Heart right ventricle (tissue), 16 donors: ENCODE measurements at regions of chr14 and their contacts with region 1.

Region 1: GRCh38 chr14:75982266-75983018 is 647 bp upstream of the TGFB3 start:
- DNase-seq: peak; percentile 84 to 87
- ATAC-seq: peak; percentile 60 to 82 (median 70)
- H3K4me3 ChIP-seq: peak overlapping the region; percentile 60 to 92 (median 78)
- H3K27ac ChIP-seq: peak overlapping the region; percentile 88 to 98 (median 96)
- H3K4me1 ChIP-seq: peaks cover 0 to 72% (median 42%) of the 10 kb centered on the region in 9 donors
- H3K27me3 ChIP-seq: no peaks in the 10 kb centered on the region
- CTCF ChIP-seq: peak; percentile 47 to 78 (median 68)

Region 2: GRCh38 chr14:75702616-75703261 is 279.7 kb before region 1 on chr14:
- intact Hi-C with region 1: loop called in 2 of 10 experiments (anchors 1 to 5 kb)
- DNase-seq: no peak
- ATAC-seq: peak; percentile 31 to 71 (median 66)
- H3K4me3 ChIP-seq: no peak overlapping the region
- H3K27ac ChIP-seq: peak overlapping the region in 7 of 10 donors; percentile 9 to 68 (median 47)
- H3K4me1 ChIP-seq: peaks cover 0 to 29% (median 15%) of the 10 kb centered on the region in 9 donors
- H3K27me3 ChIP-seq: no peaks in the 10 kb centered on the region
- CTCF ChIP-seq: no peak

Region 3: DNA sequence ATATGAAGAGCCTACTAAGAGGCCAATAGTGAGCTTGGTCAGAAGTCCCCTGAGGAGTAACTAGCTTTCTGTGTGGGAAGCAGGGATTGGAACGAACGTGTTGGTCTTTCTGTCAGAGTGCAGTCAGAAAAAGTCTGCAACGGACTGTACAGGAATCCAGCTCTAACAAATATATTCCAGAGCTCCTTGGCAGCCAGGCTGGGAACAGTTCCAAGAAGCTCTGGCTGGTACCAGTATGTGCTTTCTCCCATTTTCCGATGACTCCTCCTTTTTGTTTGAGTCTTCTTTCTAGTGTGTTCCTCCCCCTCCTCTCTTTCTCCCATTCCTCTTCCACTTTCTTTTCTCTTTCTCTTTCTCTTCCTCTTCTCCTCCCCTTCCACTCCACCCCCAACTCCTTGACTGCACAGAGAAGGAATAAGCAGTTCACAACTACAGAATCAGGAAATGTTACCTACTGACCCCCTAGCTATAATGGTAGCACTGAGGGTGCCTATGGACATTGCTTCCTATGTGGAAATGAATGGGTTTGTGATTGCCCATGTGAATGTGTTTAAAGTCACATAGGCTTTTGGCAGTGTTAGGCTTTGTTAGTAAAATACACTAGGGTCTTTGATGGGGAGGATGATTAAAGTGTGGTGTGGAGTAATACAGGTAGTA is 261.5 kb before region 1 on chr14:
- intact Hi-C with region 1: loop called in 1 of 10 experiments (anchors 5 kb)
- DNase-seq: peak; percentile 37 to 66
- ATAC-seq: peak; percentile 43 to 80 (median 63)
- H3K4me3 ChIP-seq: peak overlapping the region in 3 of 10 donors; percentile 4 to 18 (median 18)
- H3K27ac ChIP-seq: peak overlapping the region in 9 of 10 donors; percentile 13 to 82 (median 67)
- H3K4me1 ChIP-seq: peaks cover 3 to 72% (median 36%) of the 10 kb centered on the region in 9 donors
- H3K27me3 ChIP-seq: no peaks in the 10 kb centered on the region
- CTCF ChIP-seq: no peak

Region 4: DNA sequence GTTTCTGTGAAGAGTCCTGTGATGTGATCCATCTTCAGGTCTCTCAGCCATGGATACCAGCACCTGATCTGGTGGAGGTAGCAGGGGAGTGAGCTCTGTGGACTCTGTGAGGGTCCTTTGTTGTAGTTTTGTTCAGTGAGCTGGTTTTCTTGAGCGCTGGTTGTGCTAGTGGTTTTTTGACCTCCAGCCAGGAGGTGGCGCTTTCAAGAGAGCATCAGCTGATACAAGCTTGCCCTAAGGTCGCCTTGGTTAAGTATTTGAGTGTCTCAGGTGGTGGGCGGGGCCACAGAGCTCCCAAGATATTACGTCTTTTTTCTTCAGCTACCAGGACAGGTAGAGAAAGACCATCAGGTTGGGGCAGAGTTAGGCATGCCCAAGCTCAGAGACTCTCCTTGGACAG is 181.7 kb before region 1 on chr14:
- intact Hi-C with region 1: loop called in 6 of 10 experiments (anchors 2 to 10 kb)
- DNase-seq: no peak
- ATAC-seq: no peak
- H3K4me3 ChIP-seq: no peak overlapping the region
- H3K27ac ChIP-seq: no peak overlapping the region
- H3K4me1 ChIP-seq: peaks cover 0 to 26% (median 13%) of the 10 kb centered on the region in 9 donors
- H3K27me3 ChIP-seq: no peaks in the 10 kb centered on the region
- CTCF ChIP-seq: peak in 1 of 9 donors; percentile 14

Region 5: DNA sequence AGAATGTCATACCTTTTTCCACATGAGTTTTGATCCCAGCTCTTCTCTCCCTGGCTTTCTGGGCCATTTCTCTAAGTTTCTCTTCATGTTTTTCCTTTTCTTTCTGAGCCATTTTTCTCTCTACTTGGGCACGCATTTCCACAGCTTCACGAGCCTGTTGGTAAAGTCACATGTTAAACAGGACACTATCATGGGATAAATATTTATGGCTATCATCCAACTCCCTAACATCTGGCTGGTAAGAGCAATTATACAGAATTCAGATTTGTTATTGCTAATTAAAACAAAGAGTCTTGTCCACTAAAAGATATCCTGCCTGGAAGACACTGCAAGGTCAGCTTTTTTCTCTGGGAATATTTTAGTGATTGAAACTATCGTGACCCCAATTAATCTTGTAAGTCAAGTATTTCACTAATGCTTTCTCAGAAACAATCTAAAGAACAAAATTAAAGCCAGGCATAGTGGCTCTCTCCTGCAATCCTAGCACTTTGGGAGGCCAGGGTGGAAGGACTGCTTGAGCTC is 1748.6 kb after region 1 on chr14:
- intact Hi-C with region 1: no loop called
- DNase-seq: no peak
- ATAC-seq: no peak
- H3K4me3 ChIP-seq: no peak overlapping the region
- H3K27ac ChIP-seq: no peak overlapping the region
- H3K4me1 ChIP-seq: peaks cover 0 to 6% (median 0%) of the 10 kb centered on the region in 9 donors
- H3K27me3 ChIP-seq: no peaks in the 10 kb centered on the region
- CTCF ChIP-seq: no peak